ENCODE measurements at regions of chr16 and their contacts with region 1.

Region 1: DNA sequence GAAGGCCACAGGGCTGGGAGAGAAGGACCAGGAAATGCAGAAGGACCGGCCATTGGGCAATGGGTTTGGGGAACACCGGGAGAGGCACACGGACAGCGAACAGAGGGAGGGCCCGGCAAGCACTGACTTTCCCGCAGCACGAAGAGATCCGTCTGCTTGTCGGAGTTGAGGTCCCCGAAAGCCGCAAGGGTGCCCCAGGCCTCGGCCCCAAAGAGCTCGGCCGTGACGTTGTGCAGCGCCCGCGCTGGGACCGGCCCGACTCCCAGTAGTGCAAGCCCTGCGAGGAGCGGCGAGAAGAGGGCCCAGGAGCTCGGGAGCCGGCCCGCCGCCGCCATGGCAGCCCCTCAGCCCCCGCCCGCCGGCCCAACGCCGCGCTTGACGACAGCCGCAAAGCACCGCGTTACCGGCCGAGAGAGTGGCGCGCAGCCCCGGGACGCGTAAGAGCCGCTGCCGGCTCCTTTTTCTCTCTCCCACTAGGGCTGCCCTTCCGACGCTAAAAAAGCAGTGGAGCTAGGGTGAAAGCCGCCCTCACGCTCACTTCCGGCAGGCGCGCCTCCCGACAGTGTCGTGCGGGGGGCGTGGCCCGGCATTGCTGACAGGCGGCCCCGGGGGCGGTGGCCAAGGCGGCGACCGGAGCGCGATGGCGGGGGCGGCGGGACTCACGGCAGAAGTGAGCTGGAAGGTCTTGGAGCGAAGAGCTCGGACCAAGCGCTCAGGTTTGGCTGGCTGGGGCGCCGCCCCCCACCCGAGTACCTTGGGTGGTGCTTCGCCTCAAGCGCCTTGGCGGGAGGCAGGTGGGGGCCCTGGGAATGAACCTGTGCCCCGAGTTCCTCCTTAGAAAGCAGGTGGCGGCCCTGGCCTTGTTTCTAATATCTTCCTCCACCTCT is at the starts of genes ITFG1 and PHKB:
- DNase-seq: peak; percentile 90
- H3K4me3 ChIP-seq: peak within 1 kb of the TSS; percentile 67 to 99 (median 77)
- H3K27ac ChIP-seq: peak within 1 kb of the TSS; percentile 99
- H3K4me1 ChIP-seq: peaks cover 31% of the 10 kb centered on the region
- H3K27me3 ChIP-seq: no peaks in the 10 kb centered on the region
- CTCF ChIP-seq: no peak
- POLR2A ChIP-seq: peak; percentile 82
- total RNA-seq, gene ITFG1: 38.0 and 44.2 TPM in 2 replicates
- total RNA-seq, gene PHKB: 60.9 and 61.0 TPM in 2 replicates

Region 2: GRCh38 chr16:47037746-47038458 is 423.1 kb before region 1 on chr16:
- CTCF ChIA-PET with region 1: no interaction called
- POLR2A ChIA-PET with region 1: no interaction called
- dilution Hi-C with region 1: no loop called
- intact Hi-C with region 1: loop called (anchors 1 kb)
- DNase-seq: peak; percentile 76
- H3K4me3 ChIP-seq: peak overlapping the region; percentile 36 to 64 (median 38)
- H3K27ac ChIP-seq: no peak overlapping the region
- H3K4me1 ChIP-seq: no peaks in the 10 kb centered on the region
- H3K27me3 ChIP-seq: peaks cover 0 to 2% of the 10 kb centered on the region in 2 experiments
- CTCF ChIP-seq: peak; percentile 92 to 95
- POLR2A ChIP-seq: no peak

Region 3: DNA sequence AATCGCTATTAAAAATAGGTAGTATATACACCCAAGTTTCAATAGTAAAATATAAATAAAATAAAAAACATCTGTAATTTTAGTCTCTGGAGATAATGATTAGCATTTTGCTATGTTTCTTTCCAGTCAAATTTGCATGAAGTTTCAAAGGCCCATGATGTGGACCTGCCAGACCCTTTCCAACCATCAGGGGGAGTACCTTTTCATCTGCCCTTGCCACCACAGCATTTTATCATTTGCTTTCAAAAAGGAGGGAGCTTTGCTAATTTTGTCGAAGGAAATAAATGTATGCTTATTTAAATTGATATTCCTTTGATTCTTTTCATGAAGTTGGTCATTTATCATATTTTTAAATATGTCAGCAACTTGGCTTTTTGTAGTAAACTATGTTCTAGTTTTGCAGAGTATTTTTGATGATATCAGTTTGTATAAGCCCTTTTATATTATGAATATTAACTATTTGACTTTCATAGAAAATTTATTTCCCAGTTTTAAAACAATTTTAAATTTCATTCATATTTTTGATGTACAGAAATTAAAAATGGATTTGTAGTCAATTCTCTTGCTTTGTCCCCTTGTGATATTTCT is 202.0 kb before region 1 on chr16:
- CTCF ChIA-PET with region 1: no interaction called
- POLR2A ChIA-PET with region 1: no interaction called
- dilution Hi-C with region 1: no loop called
- intact Hi-C with region 1: loop called (anchors 2 kb)
- DNase-seq: peak; percentile 33
- H3K4me3 ChIP-seq: no peak overlapping the region
- H3K27ac ChIP-seq: no peak overlapping the region
- H3K4me1 ChIP-seq: no peaks in the 10 kb centered on the region
- H3K27me3 ChIP-seq: no peaks in the 10 kb centered on the region
- CTCF ChIP-seq: peak; percentile 61 to 69
- POLR2A ChIP-seq: no peak

Region 4: DNA sequence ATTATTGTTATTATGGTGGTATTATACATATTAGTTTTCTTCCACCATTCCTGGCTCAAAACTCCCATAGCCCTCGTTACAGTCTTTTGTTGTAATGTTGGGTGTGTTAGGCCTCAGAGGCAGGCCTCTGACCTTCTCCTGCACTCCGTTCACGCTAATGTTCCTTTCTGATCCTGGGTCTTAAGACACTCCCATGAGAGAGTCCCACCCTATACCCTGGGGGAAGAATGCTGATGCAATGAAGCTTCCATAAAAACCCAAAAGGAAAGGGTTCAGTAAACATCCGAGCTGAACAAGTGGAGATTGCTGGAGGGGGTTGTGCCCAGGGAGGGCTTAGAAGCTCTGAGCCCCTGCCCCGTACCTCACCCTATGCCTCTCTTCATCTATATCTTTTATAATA is 176.0 kb before region 1 on chr16:
- CTCF ChIA-PET with region 1: no interaction called
- POLR2A ChIA-PET with region 1: no interaction called
- dilution Hi-C with region 1: no loop called
- intact Hi-C with region 1: no loop called
- DNase-seq: no peak
- H3K4me3 ChIP-seq: no peak overlapping the region
- H3K27ac ChIP-seq: no peak overlapping the region
- H3K4me1 ChIP-seq: no peaks in the 10 kb centered on the region
- H3K27me3 ChIP-seq: no peaks in the 10 kb centered on the region
- CTCF ChIP-seq: no peak
- POLR2A ChIP-seq: no peak

Region 5: DNA sequence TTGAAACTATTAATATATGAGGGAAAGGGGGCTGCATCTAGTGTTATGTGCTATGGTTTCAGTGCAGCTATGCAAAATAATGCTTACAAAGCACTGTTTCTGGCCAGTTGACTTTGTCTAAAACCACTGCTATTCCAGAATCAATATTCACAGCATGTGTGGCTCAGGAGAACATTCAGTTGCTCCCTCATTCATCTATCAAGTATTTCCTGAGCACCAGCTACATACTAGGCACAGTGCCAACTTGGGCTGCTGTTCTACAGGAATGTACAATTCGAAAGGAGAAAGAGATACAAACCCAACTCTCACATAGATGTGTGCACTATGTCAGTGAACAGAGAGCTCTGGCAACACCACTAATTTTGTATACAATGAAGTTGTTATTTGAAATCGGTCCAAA is 183.2 kb after region 1 on chr16:
- CTCF ChIA-PET with region 1: no interaction called
- POLR2A ChIA-PET with region 1: no interaction called
- dilution Hi-C with region 1: no loop called
- intact Hi-C with region 1: loop called (anchors 5 kb)
- DNase-seq: peak; percentile 80
- H3K4me3 ChIP-seq: no peak overlapping the region
- H3K27ac ChIP-seq: no peak overlapping the region
- H3K4me1 ChIP-seq: peaks cover 13% of the 10 kb centered on the region
- H3K27me3 ChIP-seq: no peaks in the 10 kb centered on the region
- CTCF ChIP-seq: no peak
- POLR2A ChIP-seq: no peak

Region 6: DNA sequence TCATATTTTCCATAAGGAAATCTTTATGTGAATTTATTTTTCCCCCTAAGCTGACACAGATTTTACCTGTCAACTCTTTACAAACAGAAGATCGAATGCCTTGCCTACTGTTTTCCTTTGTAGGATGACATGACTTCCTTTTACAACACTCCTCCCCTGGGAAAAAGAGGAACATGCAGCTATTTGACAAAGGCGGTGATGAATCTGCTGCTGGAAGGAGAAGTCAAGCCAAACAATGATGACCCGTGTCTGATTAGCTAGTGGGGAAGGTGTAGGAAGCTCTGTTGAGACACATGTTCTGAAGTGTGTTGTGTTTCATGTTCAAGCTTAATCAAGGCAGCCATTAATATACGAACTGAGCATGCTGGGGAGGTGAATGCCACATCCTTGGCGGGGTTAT is 238.2 kb after region 1 on chr16:
- CTCF ChIA-PET with region 1: no interaction called
- POLR2A ChIA-PET with region 1: no interaction called
- dilution Hi-C with region 1: no loop called
- intact Hi-C with region 1: loop called (anchors 10 kb)
- DNase-seq: no peak
- H3K4me3 ChIP-seq: no peak overlapping the region
- H3K27ac ChIP-seq: no peak overlapping the region
- H3K4me1 ChIP-seq: peaks cover 26% of the 10 kb centered on the region
- H3K27me3 ChIP-seq: no peaks in the 10 kb centered on the region
- CTCF ChIP-seq: no peak
- POLR2A ChIP-seq: no peak

Region 7: GRCh38 chr16:48054881-48055601 is 594.1 kb after region 1 on chr16:
- CTCF ChIA-PET with region 1: interaction called, 8 read pairs
- POLR2A ChIA-PET with region 1: no interaction called
- dilution Hi-C with region 1: no loop called
- intact Hi-C with region 1: loop called (anchors 1 kb)
- DNase-seq: peak; percentile 45
- H3K4me3 ChIP-seq: no peak overlapping the region
- H3K27ac ChIP-seq: no peak overlapping the region
- H3K4me1 ChIP-seq: no peaks in the 10 kb centered on the region
- H3K27me3 ChIP-seq: peaks cover 0 to 2% of the 10 kb centered on the region in 2 experiments
- CTCF ChIP-seq: peak; percentile 76 to 87
- POLR2A ChIP-seq: no peak

Measured in endothelial cell of umbilical vein (primary cell).